Activated naive CD4-positive, alpha-beta T cell treated with anti-CD3 and anti-CD28 coated beads for 36 hours (primary cell): ENCODE measurements at regions of chr17 and their contacts with region 1.

Region 1: DNA sequence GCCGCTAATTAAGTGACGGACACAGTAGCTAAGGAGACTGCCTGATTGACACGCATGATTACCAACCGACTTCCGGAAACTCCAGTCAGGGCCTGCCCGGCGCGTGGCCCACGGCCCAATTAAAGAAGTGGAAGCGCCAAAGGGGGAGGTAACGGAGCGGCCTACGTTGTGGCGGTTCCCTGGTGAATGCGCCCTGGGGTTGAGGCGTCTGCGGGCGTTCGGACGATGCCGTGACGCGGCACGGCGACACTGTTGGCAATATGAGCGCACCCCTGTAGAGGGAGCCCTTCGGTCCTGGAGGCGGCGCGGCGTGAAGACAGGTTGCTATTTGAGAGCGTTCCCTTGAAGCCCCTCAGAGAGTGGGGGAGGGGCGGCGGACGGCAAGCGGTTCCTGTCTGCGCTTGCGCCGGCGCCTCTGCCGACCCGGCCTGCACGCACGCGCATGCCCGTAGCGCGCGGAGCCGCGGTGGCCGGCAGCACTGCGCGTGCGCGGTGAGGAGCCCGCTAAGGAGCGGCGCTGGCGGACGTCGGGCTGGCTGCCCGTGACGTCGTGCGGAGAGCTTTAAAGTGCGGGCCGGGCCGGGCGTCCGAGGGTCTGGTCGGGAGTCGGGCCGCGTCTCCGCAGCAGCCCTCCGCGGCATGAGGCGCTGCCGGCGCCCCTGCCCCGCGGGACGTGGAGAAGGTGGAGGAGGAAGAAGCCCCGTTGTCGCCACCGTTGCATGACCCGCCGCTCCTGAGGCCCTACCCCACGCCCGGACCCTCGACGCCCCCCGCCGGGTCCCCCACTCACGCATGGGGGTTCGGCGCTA is at the start of gene ALKBH5:
- DNase-seq: peak; percentile 98
- H3K4me3 Mint-ChIP-seq: peak within 1 kb of the TSS; percentile 96
- H3K27ac Mint-ChIP-seq: peak within 1 kb of the TSS; percentile 96
- H3K4me1 Mint-ChIP-seq: peaks cover 52% of the 10 kb centered on the region
- H3K27me3 Mint-ChIP-seq: no peaks in the 10 kb centered on the region
- total RNA-seq, gene ALKBH5: 83.4 to 86.7 TPM

Region 2: DNA sequence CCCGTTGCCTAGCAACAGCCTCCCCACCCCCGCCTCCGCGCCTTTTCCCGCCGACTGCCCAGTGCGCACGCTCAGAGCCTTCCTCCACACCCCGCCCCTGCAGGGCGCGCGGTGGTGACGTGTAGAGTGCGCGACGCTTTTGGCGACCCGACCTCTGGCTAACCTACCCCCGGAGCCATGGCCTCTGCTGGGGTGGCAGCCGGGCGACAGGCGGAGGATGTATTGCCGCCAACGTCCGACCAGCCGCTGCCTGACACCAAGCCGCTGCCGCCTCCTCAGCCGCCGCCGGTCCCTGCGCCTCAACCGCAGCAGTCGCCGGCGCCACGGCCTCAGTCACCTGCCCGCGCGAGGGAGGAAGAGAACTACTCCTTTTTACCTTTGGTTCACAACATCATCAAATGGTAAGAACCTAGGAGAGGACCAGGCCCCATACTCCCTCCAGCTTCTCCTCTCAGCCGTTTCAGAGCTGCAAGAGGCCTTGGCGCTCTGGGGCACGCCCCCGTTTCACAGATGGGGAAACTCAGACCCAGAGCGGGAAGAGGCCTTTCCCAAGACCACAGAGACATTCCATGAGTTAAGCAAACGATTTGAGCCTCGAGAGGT is 706.6 kb before region 1 on chr17 and contains the start of gene MED9:
- CTCF ChIA-PET with region 1: no interaction called
- intact Hi-C with region 1: loop called (anchors 10 kb)
- DNase-seq: peak; percentile 96
- H3K4me3 Mint-ChIP-seq: peak within 1 kb of the TSS; percentile 88
- H3K27ac Mint-ChIP-seq: peak within 1 kb of the TSS; percentile 75
- H3K4me1 Mint-ChIP-seq: peaks cover 53% of the 10 kb centered on the region
- H3K27me3 Mint-ChIP-seq: no peaks in the 10 kb centered on the region
- total RNA-seq, gene MED9: 13.2 to 14.4 TPM

Region 3: GRCh38 chr17:17752089-17752820 is 431.3 kb before region 1 on chr17:
- CTCF ChIA-PET with region 1: no interaction called
- intact Hi-C with region 1: loop called (anchors 2 kb)
- DNase-seq: peak; percentile 97
- H3K4me3 Mint-ChIP-seq: peak overlapping the region; percentile 92
- H3K27ac Mint-ChIP-seq: peak overlapping the region; percentile 98
- H3K4me1 Mint-ChIP-seq: peaks cover 71% of the 10 kb centered on the region
- H3K27me3 Mint-ChIP-seq: no peaks in the 10 kb centered on the region

Region 4: GRCh38 chr17:17935321-17936271 is 247.9 kb before region 1 on chr17:
- CTCF ChIA-PET with region 1: no interaction called
- intact Hi-C with region 1: no loop called
- DNase-seq: no peak
- H3K4me3 Mint-ChIP-seq: no peak overlapping the region
- H3K27ac Mint-ChIP-seq: no peak overlapping the region
- H3K4me1 Mint-ChIP-seq: peaks cover 38% of the 10 kb centered on the region
- H3K27me3 Mint-ChIP-seq: no peaks in the 10 kb centered on the region

Region 5: DNA sequence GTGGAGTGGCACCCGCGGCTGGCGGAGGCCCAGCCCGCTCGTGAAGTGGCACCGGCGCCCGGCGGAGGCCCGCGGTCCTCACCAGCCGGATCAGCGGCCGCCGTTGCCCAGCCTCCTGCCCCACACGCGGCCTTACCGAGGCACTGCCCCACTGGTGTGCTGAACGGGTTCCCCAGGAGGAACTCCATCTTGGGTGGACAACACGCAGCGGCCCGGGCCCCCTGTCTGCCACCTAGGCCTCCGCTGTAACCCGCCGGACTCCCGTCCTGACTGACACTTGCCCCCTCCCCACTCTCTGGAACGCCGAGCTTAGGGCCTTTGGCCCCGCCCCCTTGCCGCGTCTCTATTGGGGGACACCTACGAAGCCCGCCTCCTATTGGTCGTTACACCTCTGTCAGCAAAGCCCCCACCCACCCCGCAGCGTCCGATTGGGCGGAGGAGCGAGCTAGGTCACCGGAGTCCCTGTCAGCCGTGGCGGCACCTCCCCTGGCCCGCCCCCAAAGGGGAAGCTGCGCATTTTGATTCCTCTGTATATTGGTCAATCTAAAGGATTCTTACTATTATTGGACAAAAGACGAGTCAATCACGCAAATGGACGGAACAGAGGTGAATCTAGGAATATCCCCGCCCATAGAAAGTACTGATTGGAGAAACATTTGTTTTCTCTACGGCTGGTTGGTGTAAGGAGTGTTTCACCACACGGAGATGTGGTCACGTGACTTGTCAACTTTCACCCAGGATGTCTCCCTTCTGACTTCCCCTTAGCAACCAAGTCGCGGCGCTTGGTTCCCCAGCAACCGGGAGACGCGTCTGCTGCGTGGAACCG is 211.2 kb before region 1 on chr17 and contains the starts of genes DRC3 and TOM1L2:
- CTCF ChIA-PET with region 1: no interaction called
- intact Hi-C with region 1: loop called (anchors 2 kb)
- DNase-seq: peak; percentile 100
- H3K4me3 Mint-ChIP-seq: peak within 1 kb of the TSS; percentile 90
- H3K27ac Mint-ChIP-seq: peak within 1 kb of the TSS; percentile 75
- H3K4me1 Mint-ChIP-seq: peaks cover 35% of the 10 kb centered on the region
- H3K27me3 Mint-ChIP-seq: no peaks in the 10 kb centered on the region
- total RNA-seq, gene DRC3: 0.40 to 0.64 TPM
- total RNA-seq, gene TOM1L2: 9.8 to 9.9 TPM

Region 6: GRCh38 chr17:18141210-18141803 is 42.2 kb before region 1 on chr17:
- CTCF ChIA-PET with region 1: interaction called, 9 read pairs
- intact Hi-C with region 1: loop called (anchors 1 kb)
- DNase-seq: peak; percentile 64
- H3K4me3 Mint-ChIP-seq: no peak overlapping the region
- H3K27ac Mint-ChIP-seq: no peak overlapping the region
- H3K4me1 Mint-ChIP-seq: no peaks in the 10 kb centered on the region
- H3K27me3 Mint-ChIP-seq: no peaks in the 10 kb centered on the region

Region 7: GRCh38 chr17:18260332-18261144 is 77.0 kb after region 1 on chr17 and contains the start of gene MIEF2:
- CTCF ChIA-PET with region 1: no interaction called
- intact Hi-C with region 1: loop called (anchors 1 kb)
- DNase-seq: peak; percentile 95
- H3K4me3 Mint-ChIP-seq: peak within 1 kb of the TSS; percentile 78
- H3K27ac Mint-ChIP-seq: peak within 1 kb of the TSS; percentile 73
- H3K4me1 Mint-ChIP-seq: peaks cover 30% of the 10 kb centered on the region
- H3K27me3 Mint-ChIP-seq: no peaks in the 10 kb centered on the region
- total RNA-seq, gene MIEF2: 6.0 to 7.1 TPM

Region 8: DNA sequence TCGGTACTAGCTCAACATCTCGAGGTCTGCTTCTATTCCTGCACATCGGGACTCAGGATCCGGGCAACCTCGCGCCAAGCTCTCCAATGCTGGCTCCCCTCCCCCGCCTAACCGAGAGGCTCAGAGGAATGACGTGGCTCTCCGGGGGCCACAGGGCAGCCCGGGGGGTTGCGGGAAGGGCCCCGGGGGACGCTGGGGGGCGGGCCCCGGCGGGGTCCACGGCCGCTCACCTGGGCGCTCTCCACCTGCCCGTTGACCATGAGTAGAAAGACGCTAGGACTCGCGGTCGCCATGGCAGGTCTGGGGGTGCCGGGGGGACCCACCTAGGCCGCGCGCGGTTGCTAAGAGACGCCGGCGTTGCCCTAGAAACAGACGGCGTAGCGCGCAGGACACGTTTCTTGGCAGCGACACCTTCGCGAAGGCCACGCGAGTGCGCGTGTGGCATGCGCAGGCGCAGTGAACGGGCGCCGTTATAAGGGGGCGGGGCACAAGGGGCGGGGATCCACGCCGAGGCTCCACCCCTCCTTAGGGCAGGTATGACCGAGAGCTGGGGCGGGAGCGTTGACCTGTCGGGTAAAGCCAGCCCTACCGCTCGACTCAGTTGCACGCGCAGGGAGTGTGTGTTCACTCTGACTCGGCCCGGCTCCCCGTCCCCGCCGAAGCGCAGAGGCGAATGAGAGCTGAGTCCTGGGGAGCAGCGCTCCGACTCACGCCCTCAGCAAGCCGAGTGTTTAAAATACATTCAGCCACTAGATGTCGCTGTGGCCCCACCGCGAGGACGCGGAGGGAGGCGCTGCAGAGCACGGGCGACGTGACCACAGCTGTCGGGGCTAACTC is 1179.0 kb after region 1 on chr17 and contains the start of gene B9D1:
- CTCF ChIA-PET with region 1: no interaction called
- intact Hi-C with region 1: loop called (anchors 2 kb)
- DNase-seq: peak; percentile 93
- H3K4me3 Mint-ChIP-seq: peak within 1 kb of the TSS; percentile 87
- H3K27ac Mint-ChIP-seq: peak within 1 kb of the TSS; percentile 33
- H3K4me1 Mint-ChIP-seq: peaks cover 5% of the 10 kb centered on the region
- H3K27me3 Mint-ChIP-seq: peaks cover 2% of the 10 kb centered on the region
- total RNA-seq, gene B9D1: 8.7 TPM